Calu3 (cell line): ENCODE measurements at regions of chr7 and their contacts with region 1.

Region 1: GRCh38 chr7:116525913-116526861 is 1.4 kb downstream of the CAV1 start:
- DNase-seq: peak; percentile 86
- H3K4me3 Mint-ChIP-seq: peak overlapping the region; percentile 93
- H3K27ac Mint-ChIP-seq: peak overlapping the region; percentile 73
- H3K4me1 Mint-ChIP-seq: peaks cover 59% of the 10 kb centered on the region
- H3K27me3 Mint-ChIP-seq: no peaks in the 10 kb centered on the region
- CTCF ChIP-seq: peak; percentile 93

Region 2: DNA sequence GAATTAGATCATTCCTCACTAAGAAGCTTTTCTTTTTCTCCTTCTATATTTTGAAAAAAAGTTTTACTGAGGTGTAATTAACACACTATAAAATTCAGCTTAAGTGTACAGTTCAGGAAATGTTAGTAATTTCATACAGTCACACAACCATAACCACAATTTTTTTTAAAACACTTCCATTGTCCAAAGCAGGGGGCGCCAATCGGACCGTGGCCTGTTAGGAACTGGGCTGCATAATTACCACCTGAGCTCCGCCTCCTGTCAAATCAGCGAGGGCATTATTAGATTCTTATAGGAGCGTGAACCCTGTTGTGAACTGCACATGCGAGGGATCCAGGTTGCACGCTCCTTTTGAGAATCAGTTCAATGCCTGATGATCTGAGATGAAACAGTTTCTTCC is 922.8 kb before region 1 on chr7:
- CTCF ChIA-PET with region 1: no interaction called
- intact Hi-C with region 1: no loop called
- DNase-seq: no peak
- H3K4me3 Mint-ChIP-seq: no peak overlapping the region
- H3K27ac Mint-ChIP-seq: no peak overlapping the region
- H3K4me1 Mint-ChIP-seq: no peaks in the 10 kb centered on the region
- H3K27me3 Mint-ChIP-seq: no peaks in the 10 kb centered on the region
- CTCF ChIP-seq: no peak

Region 3: GRCh38 chr7:116258734-116259133 is 267.5 kb before region 1 on chr7:
- CTCF ChIA-PET with region 1: interaction called, 7 read pairs
- intact Hi-C with region 1: loop called (anchors 1 kb)
- DNase-seq: peak; percentile 54
- H3K4me3 Mint-ChIP-seq: no peak overlapping the region
- H3K27ac Mint-ChIP-seq: peak overlapping the region; percentile 69
- H3K4me1 Mint-ChIP-seq: peaks cover 20% of the 10 kb centered on the region
- H3K27me3 Mint-ChIP-seq: no peaks in the 10 kb centered on the region
- CTCF ChIP-seq: peak; percentile 53

Region 4: GRCh38 chr7:116354546-116355408 is 171.4 kb before region 1 on chr7:
- CTCF ChIA-PET with region 1: interaction called, 3 read pairs
- intact Hi-C with region 1: loop called (anchors 5 kb)
- DNase-seq: peak; percentile 84
- H3K4me3 Mint-ChIP-seq: peak overlapping the region; percentile 69
- H3K27ac Mint-ChIP-seq: peak overlapping the region; percentile 98
- H3K4me1 Mint-ChIP-seq: peaks cover 56% of the 10 kb centered on the region
- H3K27me3 Mint-ChIP-seq: no peaks in the 10 kb centered on the region
- CTCF ChIP-seq: no peak

Region 5: GRCh38 chr7:116499168-116500077 is 26.8 kb before region 1 on chr7 and contains the start of gene CAV2:
- CTCF ChIA-PET with region 1: interaction called, 19 read pairs
- intact Hi-C with region 1: loop called (anchors 2 kb)
- DNase-seq: peak; percentile 79
- H3K4me3 Mint-ChIP-seq: peak within 1 kb of the TSS; percentile 94
- H3K27ac Mint-ChIP-seq: peak within 1 kb of the TSS; percentile 82
- H3K4me1 Mint-ChIP-seq: peaks cover 30% of the 10 kb centered on the region
- H3K27me3 Mint-ChIP-seq: no peaks in the 10 kb centered on the region
- CTCF ChIP-seq: no peak
- total RNA-seq, gene CAV2: 74.7 and 76.4 TPM in 2 replicates

Region 6: DNA sequence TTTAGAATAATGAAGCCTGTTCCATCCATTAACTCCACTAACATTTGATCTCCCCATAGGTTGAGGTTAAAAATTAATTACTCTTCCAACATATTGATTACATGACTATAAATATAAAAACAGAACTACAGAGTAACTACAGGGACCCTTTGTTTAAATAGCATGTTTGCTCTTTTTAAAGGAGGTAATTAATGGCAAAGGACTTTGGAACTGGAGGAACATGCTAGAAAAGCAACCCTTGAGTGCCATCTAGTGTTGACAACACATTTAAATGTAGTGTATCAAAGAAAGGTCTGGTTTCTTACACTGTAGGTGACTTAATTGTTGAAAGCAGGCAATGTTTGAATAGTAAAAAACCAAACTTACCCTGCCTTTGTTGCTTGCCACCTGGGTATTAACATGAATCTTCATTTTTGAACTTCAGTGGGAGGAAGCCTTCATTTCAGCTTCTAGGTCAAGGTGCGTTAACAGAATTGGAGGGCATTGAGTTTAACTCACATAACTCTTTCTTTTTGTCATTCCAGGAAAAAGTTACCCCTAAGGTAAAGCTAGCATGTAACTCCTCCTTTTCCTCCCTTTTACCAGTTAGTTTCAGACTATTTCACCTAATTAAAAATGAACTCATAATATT is 283.6 kb after region 1 on chr7:
- CTCF ChIA-PET with region 1: no interaction called
- intact Hi-C with region 1: loop called (anchors 10 kb)
- DNase-seq: peak; percentile 57
- H3K4me3 Mint-ChIP-seq: peak overlapping the region; percentile 36
- H3K27ac Mint-ChIP-seq: peak overlapping the region; percentile 64
- H3K4me1 Mint-ChIP-seq: peaks cover 64% of the 10 kb centered on the region
- H3K27me3 Mint-ChIP-seq: no peaks in the 10 kb centered on the region
- CTCF ChIP-seq: peak; percentile 30

Region 7: GRCh38 chr7:116899308-116899707 is 373.1 kb after region 1 on chr7:
- CTCF ChIA-PET with region 1: no interaction called
- intact Hi-C with region 1: no loop called
- DNase-seq: no peak
- H3K4me3 Mint-ChIP-seq: no peak overlapping the region
- H3K27ac Mint-ChIP-seq: no peak overlapping the region
- H3K4me1 Mint-ChIP-seq: no peaks in the 10 kb centered on the region
- H3K27me3 Mint-ChIP-seq: no peaks in the 10 kb centered on the region
- CTCF ChIP-seq: no peak